ENCODE measurements at regions of chr12 and their contacts with region 1.

Region 1: GRCh38 chr12:49776413-49776812 is 35.1 kb downstream of the TMBIM6 start:
- DNase-seq: no peak
- ATAC-seq: peak; percentile 95
- H3K4me3 ChIP-seq: no peak overlapping the region
- H3K27ac ChIP-seq: no peak overlapping the region
- H3K4me1 ChIP-seq: peaks cover 6% of the 10 kb centered on the region
- H3K27me3 ChIP-seq: no peaks in the 10 kb centered on the region
- CTCF ChIP-seq: peak; percentile 79 to 80 (median 79)
- EP300 ChIP-seq: no peak
- POLR2A ChIP-seq: no peak
- RAD21 ChIP-seq: peak; percentile 90

Region 2: DNA sequence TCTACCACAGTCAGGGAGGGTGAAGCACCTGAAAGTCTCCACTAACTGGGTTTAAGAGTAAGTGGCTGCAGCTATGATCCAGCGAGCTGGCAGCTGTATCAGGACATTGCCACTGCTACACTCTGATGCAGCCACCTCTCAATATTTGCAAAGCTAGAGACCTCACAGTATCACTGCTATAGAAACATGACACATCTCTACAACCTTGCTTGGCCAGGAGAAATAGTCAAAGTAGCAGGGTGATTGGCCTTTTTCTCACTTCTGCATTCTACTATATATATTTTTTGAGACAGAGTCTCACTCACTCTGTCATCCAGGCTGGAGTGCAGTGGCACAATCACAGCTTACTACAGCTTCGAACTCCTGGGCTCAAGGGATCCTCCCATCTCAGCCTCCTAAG is 59.9 kb before region 1 on chr12:
- CTCF ChIA-PET with region 1: interaction called, 10 read pairs
- POLR2A ChIA-PET with region 1: interaction called, 5 read pairs
- RAD21 ChIA-PET with region 1: no interaction called
- SMC1A ChIA-PET with region 1: interaction called, 3 read pairs
- in situ Hi-C with region 1: no loop called
- intact Hi-C with region 1: no loop called
- DNase-seq: no peak
- ATAC-seq: peak; percentile 95
- H3K4me3 ChIP-seq: no peak overlapping the region
- H3K27ac ChIP-seq: no peak overlapping the region
- H3K4me1 ChIP-seq: peaks cover 9% of the 10 kb centered on the region
- H3K27me3 ChIP-seq: peaks cover 0 to 2% of the 10 kb centered on the region in 2 experiments; a peak in 1 of 4 replicates
- CTCF ChIP-seq: no peak
- EP300 ChIP-seq: no peak
- POLR2A ChIP-seq: no peak
- RAD21 ChIP-seq: no peak

Region 3: GRCh38 chr12:49763006-49763591 is 13.3 kb before region 1 on chr12:
- CTCF ChIA-PET with region 1: interaction called, 21 read pairs
- POLR2A ChIA-PET with region 1: no interaction called
- RAD21 ChIA-PET with region 1: interaction called, 3 read pairs
- SMC1A ChIA-PET with region 1: interaction called, 5 read pairs
- in situ Hi-C with region 1: no loop called
- intact Hi-C with region 1: no loop called
- DNase-seq: no peak
- ATAC-seq: peak; percentile 85
- H3K4me3 ChIP-seq: no peak overlapping the region
- H3K27ac ChIP-seq: peak overlapping the region; percentile 30
- H3K4me1 ChIP-seq: peaks cover 26% of the 10 kb centered on the region
- H3K27me3 ChIP-seq: no peaks in the 10 kb centered on the region
- CTCF ChIP-seq: peak; percentile 59 to 88 (median 82)
- EP300 ChIP-seq: no peak
- POLR2A ChIP-seq: no peak
- RAD21 ChIP-seq: peak; percentile 47

Region 4: DNA sequence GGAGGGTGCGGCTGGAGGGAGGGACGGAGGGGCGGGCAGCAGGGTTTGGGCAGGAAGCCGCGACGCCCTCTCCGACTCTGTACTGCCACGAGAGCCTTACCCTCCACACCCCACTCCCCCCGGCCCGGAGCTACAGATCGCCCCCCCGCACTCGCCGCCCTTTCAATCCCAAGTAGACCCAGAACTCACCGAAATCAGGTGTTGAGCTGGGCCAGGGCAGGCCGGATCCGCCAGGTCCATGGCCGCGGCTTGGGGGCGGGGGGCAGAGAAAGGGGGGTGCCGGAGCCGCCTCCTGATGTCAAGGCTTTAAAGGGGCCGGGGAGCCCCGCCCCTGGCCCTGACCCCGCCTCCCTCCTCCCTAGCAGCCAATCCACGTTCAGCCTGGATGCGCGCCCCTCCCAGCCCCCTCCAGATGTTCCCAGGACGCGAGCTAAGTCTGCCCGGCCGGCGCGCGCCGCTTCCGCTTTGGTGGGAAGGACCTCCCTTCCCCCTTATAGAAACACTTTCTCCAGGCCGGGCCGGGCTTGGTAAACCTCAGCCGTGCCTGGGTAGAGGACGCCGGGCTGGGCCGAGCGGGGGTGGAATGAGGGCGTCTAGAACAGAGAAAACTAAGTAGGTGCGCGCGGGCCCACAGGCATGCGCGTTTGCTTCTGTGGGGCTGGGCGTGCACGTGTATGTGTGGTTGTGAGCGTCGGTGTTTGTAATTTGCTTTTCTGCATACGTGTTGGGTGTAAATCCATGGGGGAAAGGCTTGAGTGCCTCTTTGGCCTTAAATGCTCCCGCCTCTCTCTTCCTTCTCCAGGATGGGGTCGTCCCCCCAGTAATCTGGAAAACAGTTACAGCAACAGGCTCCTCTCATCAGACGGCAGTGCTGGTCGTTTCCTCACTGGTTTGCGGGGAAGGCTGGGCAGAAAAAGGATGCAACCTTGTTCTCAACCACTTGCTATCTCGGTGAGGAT is 52.0 kb after region 1 on chr12 and contains the start of gene NCKAP5L:
- CTCF ChIA-PET with region 1: interaction called, 18 read pairs
- POLR2A ChIA-PET with region 1: interaction called, 4 read pairs
- RAD21 ChIA-PET with region 1: interaction called, 6 read pairs
- SMC1A ChIA-PET with region 1: interaction called, 4 read pairs
- in situ Hi-C with region 1: no loop called
- intact Hi-C with region 1: no loop called
- DNase-seq: no peak
- ATAC-seq: peak; percentile 97
- H3K4me3 ChIP-seq: peak within 1 kb of the TSS; percentile 99
- H3K27ac ChIP-seq: peak within 1 kb of the TSS; percentile 58
- H3K4me1 ChIP-seq: peaks cover 26% of the 10 kb centered on the region
- H3K27me3 ChIP-seq: no peaks in the 10 kb centered on the region
- CTCF ChIP-seq: no peak
- EP300 ChIP-seq: 0 out of 4 replicates have a peak, but pooled peaks of 1 of the 2 experiments have one; percentile 21
- POLR2A ChIP-seq: peak; percentile 85
- RAD21 ChIP-seq: no peak
- polyA plus RNA-seq, gene NCKAP5L: 0.03 to 0.16 TPM